CD4-positive, alpha-beta T cell (primary cell): ENCODE measurements at regions of chr17 and their contacts with region 1.

Region 1: GRCh38 chr17:7931709-7932482 is at the starts of genes CNTROB and TRAPPC1:
- DNase-seq: peak; percentile 97 to 100 (median 99)
- ATAC-seq: peak; percentile 92
- H3K4me3 ChIP-seq: peak within 1 kb of the TSS; percentile 94
- H3K4me3 Mint-ChIP-seq: peak within 1 kb of the TSS; percentile 97
- H3K27ac ChIP-seq: peak within 1 kb of the TSS; percentile 83
- H3K27ac Mint-ChIP-seq: peak within 1 kb of the TSS; percentile 90
- H3K4me1 ChIP-seq: peaks cover 40% of the 10 kb centered on the region
- H3K4me1 Mint-ChIP-seq: peaks cover 49% of the 10 kb centered on the region
- H3K27me3 ChIP-seq: no peaks in the 10 kb centered on the region
- H3K27me3 Mint-ChIP-seq: no peaks in the 10 kb centered on the region
- CTCF ChIP-seq: no peak
- total RNA-seq, gene CNTROB: 20.6 to 21.9 TPM
- total RNA-seq, gene TRAPPC1: 39.3 to 39.5 TPM

Region 2: GRCh38 chr17:7887482-7888183 is 44.3 kb before region 1 on chr17:
- CTCF ChIA-PET with region 1: no interaction called
- POLR2A ChIA-PET with region 1: interaction called, 7 read pairs
- intact Hi-C with region 1: loop called in 1 of 2 experiments (anchors 5 kb)
- DNase-seq: peak; percentile 72 to 97 (median 86)
- ATAC-seq: peak; percentile 69
- H3K4me3 ChIP-seq: peak overlapping the region; percentile 98
- H3K4me3 Mint-ChIP-seq: no peak overlapping the region
- H3K27ac ChIP-seq: peak overlapping the region; percentile 75 to 96
- H3K27ac Mint-ChIP-seq: no peak overlapping the region
- H3K4me1 ChIP-seq: peaks cover 49% of the 10 kb centered on the region
- H3K4me1 Mint-ChIP-seq: peaks cover 6% of the 10 kb centered on the region
- H3K27me3 ChIP-seq: no peaks in the 10 kb centered on the region
- H3K27me3 Mint-ChIP-seq: no peaks in the 10 kb centered on the region
- CTCF ChIP-seq: no peak

Region 3: GRCh38 chr17:7972131-7972785 is 40.4 kb after region 1 on chr17:
- CTCF ChIA-PET with region 1: no interaction called
- POLR2A ChIA-PET with region 1: no interaction called
- intact Hi-C with region 1: loop called in 1 of 2 experiments (anchors 5 kb)
- DNase-seq: no peak
- ATAC-seq: no peak
- H3K4me3 ChIP-seq: no peak overlapping the region
- H3K4me3 Mint-ChIP-seq: no peak overlapping the region
- H3K27ac ChIP-seq: no peak overlapping the region
- H3K27ac Mint-ChIP-seq: no peak overlapping the region
- H3K4me1 ChIP-seq: no peaks in the 10 kb centered on the region
- H3K4me1 Mint-ChIP-seq: no peaks in the 10 kb centered on the region
- H3K27me3 ChIP-seq: peaks cover 5 to 10% of the 10 kb centered on the region in 2 experiments
- H3K27me3 Mint-ChIP-seq: peaks cover 6% of the 10 kb centered on the region
- CTCF ChIP-seq: no peak